GM12878 (cell line): ENCODE measurements at regions of chr17 and their contacts with region 1.

Region 1: DNA sequence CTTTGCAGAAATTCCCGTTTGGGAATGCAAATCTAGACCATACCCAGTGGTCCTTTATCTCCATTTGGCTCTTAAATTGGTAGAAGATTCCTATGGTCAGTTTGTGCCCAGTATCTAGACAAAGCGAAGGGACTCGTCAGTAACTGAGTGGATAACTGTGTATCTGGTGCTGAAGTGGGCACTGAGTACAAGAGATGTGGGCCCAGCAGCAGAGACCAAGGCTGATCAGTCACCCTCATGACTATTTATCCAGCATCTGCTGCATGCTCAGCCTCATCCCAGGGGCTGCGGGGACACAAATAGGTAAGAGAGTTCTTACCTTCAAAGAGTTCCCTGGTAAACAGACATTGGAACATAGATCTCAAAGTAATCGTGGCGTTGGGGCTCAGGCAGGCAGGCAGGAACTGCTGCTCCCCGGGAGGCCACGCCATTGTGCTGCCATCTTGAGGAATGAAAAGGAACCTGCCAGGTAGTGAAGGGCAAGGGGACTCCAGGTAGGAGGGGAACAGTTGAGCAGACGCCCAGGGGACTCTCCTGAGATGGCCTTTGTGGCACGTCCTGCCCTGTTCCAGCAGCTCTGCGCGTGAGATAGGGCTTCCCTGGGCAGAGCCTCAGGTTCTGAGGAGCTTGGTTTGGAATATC is 10.3 kb downstream of the NT5M start:
- DNase-seq: no peak
- ATAC-seq: peak; percentile 100
- H3K4me3 ChIP-seq: no peak overlapping the region
- H3K27ac ChIP-seq: no peak overlapping the region
- H3K4me1 ChIP-seq: no peaks in the 10 kb centered on the region
- H3K27me3 ChIP-seq: no peaks in the 10 kb centered on the region
- CTCF ChIP-seq: peak; percentile 87 to 91 (median 89)
- EP300 ChIP-seq: no peak
- POLR2A ChIP-seq: no peak
- RAD21 ChIP-seq: peak; percentile 92

Region 2: DNA sequence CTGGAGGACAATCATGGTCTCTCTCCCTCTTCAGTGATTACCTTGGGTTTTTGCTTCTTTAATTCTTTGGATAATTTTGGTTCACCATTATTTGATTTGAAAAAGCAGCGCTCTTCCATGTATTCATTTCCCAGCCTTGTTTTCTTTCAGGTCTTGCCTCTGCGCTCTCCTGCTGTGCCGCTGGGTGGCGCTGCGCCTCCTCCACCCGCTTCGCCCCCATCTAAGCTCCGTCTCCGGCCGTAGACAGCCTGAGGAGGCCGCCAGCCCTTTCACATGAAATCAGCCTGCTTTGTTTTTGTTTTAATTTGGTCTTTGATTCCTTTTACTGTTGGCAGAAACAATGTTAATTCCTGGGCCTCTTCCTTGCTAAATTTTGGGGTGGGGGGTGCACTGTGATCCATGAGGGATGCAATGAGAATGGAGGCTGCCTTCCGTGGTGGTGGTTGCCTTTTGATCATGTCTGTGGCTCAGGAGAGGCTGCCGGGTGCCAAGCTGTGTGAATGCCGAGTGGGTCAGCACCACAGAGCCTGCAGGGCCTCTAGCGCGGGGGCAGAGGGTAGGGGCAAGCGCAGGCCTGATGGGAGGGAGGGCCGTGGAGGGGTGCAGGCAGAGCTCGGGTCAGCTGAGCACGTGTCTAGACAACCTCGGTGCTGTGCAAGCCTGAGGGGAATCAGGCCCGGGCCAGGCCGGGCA is 171.5 kb before region 1 on chr17:
- CTCF ChIA-PET with region 1: interaction called, 5 read pairs
- POLR2A ChIA-PET with region 1: no interaction called
- RAD21 ChIA-PET with region 1: interaction called, 11 read pairs
- SMC1A ChIA-PET with region 1: no interaction called
- in situ Hi-C with region 1: no loop called
- intact Hi-C with region 1: no loop called
- DNase-seq: no peak
- ATAC-seq: peak; percentile 62
- H3K4me3 ChIP-seq: no peak overlapping the region
- H3K27ac ChIP-seq: no peak overlapping the region
- H3K4me1 ChIP-seq: no peaks in the 10 kb centered on the region; the same call in 1 of the 2 replicates
- H3K27me3 ChIP-seq: no peaks in the 10 kb centered on the region
- CTCF ChIP-seq: peak; percentile 62 to 81 (median 73)
- EP300 ChIP-seq: no peak
- POLR2A ChIP-seq: no peak
- RAD21 ChIP-seq: peak; percentile 73

Region 3: GRCh38 chr17:17280613-17281549 is 32.6 kb before region 1 on chr17 and contains the start of gene COPS3:
- CTCF ChIA-PET with region 1: interaction called, 13 read pairs
- POLR2A ChIA-PET with region 1: no interaction called
- RAD21 ChIA-PET with region 1: interaction called, 8 read pairs
- SMC1A ChIA-PET with region 1: interaction called, 12 read pairs
- in situ Hi-C with region 1: no loop called
- intact Hi-C with region 1: loop called (anchors 5 kb)
- DNase-seq: peak; percentile 84
- ATAC-seq: peak; percentile 96
- H3K4me3 ChIP-seq: peak within 1 kb of the TSS; percentile 67
- H3K27ac ChIP-seq: peak within 1 kb of the TSS; percentile 97
- H3K4me1 ChIP-seq: peaks cover 14% of the 10 kb centered on the region
- H3K27me3 ChIP-seq: no peaks in the 10 kb centered on the region
- CTCF ChIP-seq: no peak
- EP300 ChIP-seq: no peak
- POLR2A ChIP-seq: peak; percentile 94
- RAD21 ChIP-seq: no peak
- polyA plus RNA-seq, gene COPS3: 182 TPM

Region 4: DNA sequence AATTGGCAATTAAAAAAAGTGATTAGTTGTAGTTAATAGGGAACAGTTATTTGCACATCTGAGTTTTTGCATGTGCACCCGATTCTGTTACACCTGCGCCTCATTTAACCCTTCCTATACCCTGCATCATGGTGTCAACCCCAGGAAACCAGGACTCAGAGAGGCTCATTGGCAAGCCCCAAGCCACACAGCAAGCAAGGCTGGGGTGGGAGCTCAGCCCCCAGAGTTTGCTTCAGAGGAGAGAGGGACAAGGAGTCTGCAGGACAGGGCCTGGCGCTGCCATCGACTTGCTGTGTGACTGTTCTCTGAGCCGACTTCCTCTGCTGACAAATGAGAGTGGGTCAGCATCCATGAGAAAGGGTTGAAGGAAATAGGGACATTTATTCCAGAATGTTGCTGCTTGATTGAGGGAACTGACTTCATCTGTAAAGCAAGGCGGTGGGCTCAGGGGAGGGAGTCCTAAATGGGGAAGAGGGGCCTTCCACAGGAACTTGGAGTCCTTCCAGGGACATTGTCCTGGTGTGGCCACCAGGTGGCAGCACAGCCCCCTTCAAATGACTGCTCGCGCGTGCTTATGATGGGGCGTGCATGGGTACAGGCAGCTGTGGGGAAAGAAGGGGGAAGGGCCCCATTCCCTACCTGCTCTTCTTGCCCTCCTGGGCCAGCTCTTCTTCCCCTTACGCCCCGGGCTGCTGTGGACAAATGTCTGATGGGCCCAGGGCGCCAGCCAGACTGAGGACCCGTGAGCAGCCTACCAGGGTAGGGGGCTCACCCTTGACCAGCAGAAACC is 41.3 kb after region 1 on chr17:
- CTCF ChIA-PET with region 1: no interaction called
- POLR2A ChIA-PET with region 1: no interaction called
- RAD21 ChIA-PET with region 1: no interaction called
- SMC1A ChIA-PET with region 1: no interaction called
- in situ Hi-C with region 1: no loop called
- intact Hi-C with region 1: no loop called
- DNase-seq: peak; percentile 4
- ATAC-seq: peak; percentile 88
- H3K4me3 ChIP-seq: no peak overlapping the region
- H3K27ac ChIP-seq: no peak overlapping the region
- H3K4me1 ChIP-seq: no peaks in the 10 kb centered on the region
- H3K27me3 ChIP-seq: no peaks in the 10 kb centered on the region
- CTCF ChIP-seq: peak; percentile 89 to 91 (median 90)
- EP300 ChIP-seq: no peak
- POLR2A ChIP-seq: no peak
- RAD21 ChIP-seq: peak; percentile 72